ENCODE measurements at regions of chr11 and their contacts with region 1.

Region 1: DNA sequence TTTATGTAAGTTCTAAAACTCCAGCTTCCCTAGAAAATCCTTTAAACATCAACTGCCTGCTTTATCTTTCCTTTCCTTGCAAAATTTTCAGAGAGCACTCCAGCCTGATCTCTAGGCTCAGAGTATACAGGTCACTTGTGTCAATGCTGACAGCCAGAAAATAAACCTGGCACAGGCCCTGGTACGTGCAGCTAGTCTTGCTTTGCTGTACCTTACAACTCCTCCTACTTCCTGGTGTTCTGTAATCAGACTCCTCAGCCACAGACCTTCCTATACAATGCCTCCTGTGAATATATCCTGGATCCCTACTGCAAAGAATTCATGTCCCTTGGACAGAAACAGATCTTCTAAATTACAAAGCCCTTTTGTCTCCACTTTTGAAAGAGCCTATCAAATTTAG is 24.2 kb upstream of the TMEM123 start:
- DNase-seq: peak; percentile 73
- H3K4me3 Mint-ChIP-seq: no peak overlapping the region
- H3K27ac Mint-ChIP-seq: peak overlapping the region; percentile 72
- H3K4me1 Mint-ChIP-seq: peaks cover 18% of the 10 kb centered on the region
- H3K27me3 Mint-ChIP-seq: no peaks in the 10 kb centered on the region
- CTCF ChIP-seq: no peak

Region 2: GRCh38 chr11:102317099-102317767 is 159.6 kb before region 1 on chr11 and contains the start of gene BIRC3:
- CTCF ChIA-PET with region 1: no interaction called
- POLR2A ChIA-PET with region 1: no interaction called
- intact Hi-C with region 1: no loop called
- DNase-seq: peak; percentile 96
- H3K4me3 Mint-ChIP-seq: peak within 1 kb of the TSS; percentile 85
- H3K27ac Mint-ChIP-seq: peak within 1 kb of the TSS; percentile 99
- H3K4me1 Mint-ChIP-seq: peaks cover 50% of the 10 kb centered on the region
- H3K27me3 Mint-ChIP-seq: no peaks in the 10 kb centered on the region
- CTCF ChIP-seq: no peak
- total RNA-seq, gene BIRC3: 91.6 and 124 TPM in 2 replicates

Region 3: GRCh38 chr11:102451681-102452460 is 24.9 kb before region 1 on chr11:
- CTCF ChIA-PET with region 1: interaction called, 4 read pairs
- POLR2A ChIA-PET with region 1: interaction called, 28 read pairs
- intact Hi-C with region 1: no loop called
- DNase-seq: peak; percentile 62
- H3K4me3 Mint-ChIP-seq: peak overlapping the region; percentile 94
- H3K27ac Mint-ChIP-seq: peak overlapping the region; percentile 90
- H3K4me1 Mint-ChIP-seq: peaks cover 35% of the 10 kb centered on the region
- H3K27me3 Mint-ChIP-seq: no peaks in the 10 kb centered on the region
- CTCF ChIP-seq: no peak

Region 4: DNA sequence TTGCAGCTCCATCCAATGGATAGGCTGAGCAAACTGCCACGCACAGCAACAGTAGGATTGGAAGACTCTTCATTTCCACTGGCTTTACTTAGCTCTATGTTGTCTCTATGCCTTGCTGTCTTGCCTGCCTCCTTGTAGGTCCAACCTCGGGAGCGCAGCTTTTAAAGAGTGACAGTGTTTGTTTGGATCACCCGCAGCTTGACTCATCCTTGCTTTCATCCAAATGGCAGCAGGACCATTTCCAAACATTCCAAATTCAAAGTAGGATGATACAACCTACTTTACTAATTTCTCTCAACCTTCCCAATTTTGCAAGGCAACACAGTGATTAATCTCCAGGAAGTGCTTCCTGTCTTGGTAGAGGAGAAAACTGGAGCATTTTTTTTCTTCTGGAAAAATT is 366.7 kb after region 1 on chr11 and contains the start of gene MMP3:
- CTCF ChIA-PET with region 1: no interaction called
- POLR2A ChIA-PET with region 1: no interaction called
- intact Hi-C with region 1: no loop called
- DNase-seq: peak; percentile 48
- H3K4me3 Mint-ChIP-seq: no peak within 1 kb of the TSS
- H3K27ac Mint-ChIP-seq: no peak within 1 kb of the TSS
- H3K4me1 Mint-ChIP-seq: peaks cover 24% of the 10 kb centered on the region
- H3K27me3 Mint-ChIP-seq: no peaks in the 10 kb centered on the region
- CTCF ChIP-seq: no peak
- total RNA-seq, gene MMP3: 0.19 TPM in 1 of 2 replicates, not detected in the other